Activated CD8-positive, alpha-beta T cell treated with anti-CD3 and anti-CD28 coated beads for 36 hours (primary cell): ENCODE measurements at regions of chr10 and their contacts with region 1.

Region 1: GRCh38 chr10:22666287-22667092 is 47.9 kb downstream of the PIP4K2A start:
- DNase-seq: peak; percentile 80
- ATAC-seq: peak; percentile 79
- H3K4me3 Mint-ChIP-seq: peak overlapping the region; percentile 81
- H3K27ac Mint-ChIP-seq: peak overlapping the region; percentile 93
- H3K4me1 Mint-ChIP-seq: peaks cover 89% of the 10 kb centered on the region
- H3K27me3 Mint-ChIP-seq: no peaks in the 10 kb centered on the region
- CTCF ChIP-seq: no peak

Region 2: GRCh38 chr10:22316285-22317120 is 350.0 kb before region 1 on chr10 and contains the start of gene COMMD3:
- CTCF ChIA-PET with region 1: no interaction called
- POLR2A ChIA-PET with region 1: no interaction called
- intact Hi-C with region 1: no loop called
- DNase-seq: peak; percentile 82
- ATAC-seq: peak; percentile 67
- H3K4me3 Mint-ChIP-seq: peak within 1 kb of the TSS; percentile 88
- H3K27ac Mint-ChIP-seq: peak within 1 kb of the TSS; percentile 91
- H3K4me1 Mint-ChIP-seq: peaks cover 32% of the 10 kb centered on the region
- H3K27me3 Mint-ChIP-seq: peaks cover 17% of the 10 kb centered on the region
- CTCF ChIP-seq: no peak
- total RNA-seq, gene COMMD3: 64.7 to 68.7 TPM

Region 3: GRCh38 chr10:22682237-22683139 is 16.0 kb after region 1 on chr10:
- CTCF ChIA-PET with region 1: interaction called, 11 read pairs
- POLR2A ChIA-PET with region 1: interaction called, 32 read pairs
- intact Hi-C with region 1: loop called (anchors 2 kb)
- DNase-seq: peak; percentile 85
- ATAC-seq: peak; percentile 42
- H3K4me3 Mint-ChIP-seq: peak overlapping the region; percentile 59
- H3K27ac Mint-ChIP-seq: peak overlapping the region; percentile 100
- H3K4me1 Mint-ChIP-seq: peaks cover 88% of the 10 kb centered on the region
- H3K27me3 Mint-ChIP-seq: no peaks in the 10 kb centered on the region
- CTCF ChIP-seq: no peak